Ascending aorta (tissue), 2 donors: ENCODE measurements at regions of chr1 and their contacts with region 1.

Region 1: GRCh38 chr1:235075188-235075926 is 53.3 kb downstream of the TOMM20 start:
- DNase-seq: peak; percentile 82 to 96
- H3K4me3 ChIP-seq: peak overlapping the region; percentile 32 to 49
- H3K27ac ChIP-seq: peak overlapping the region; percentile 94 to 98
- H3K4me1 ChIP-seq: peaks cover 19 to 71% of the 10 kb centered on the region in 2 donors
- H3K27me3 ChIP-seq: no peaks in the 10 kb centered on the region
- CTCF ChIP-seq: no peak

Region 2: GRCh38 chr1:234918181-234918841 is 157.0 kb before region 1 on chr1:
- intact Hi-C with region 1: loop called (anchors 2 kb)
- DNase-seq: peak in 1 of 2 donors; percentile 75
- H3K4me3 ChIP-seq: no peak overlapping the region
- H3K27ac ChIP-seq: peak overlapping the region; percentile 86 to 94
- H3K4me1 ChIP-seq: peaks cover 28 to 77% of the 10 kb centered on the region in 2 donors
- H3K27me3 ChIP-seq: no peaks in the 10 kb centered on the region
- CTCF ChIP-seq: no peak

Region 3: DNA sequence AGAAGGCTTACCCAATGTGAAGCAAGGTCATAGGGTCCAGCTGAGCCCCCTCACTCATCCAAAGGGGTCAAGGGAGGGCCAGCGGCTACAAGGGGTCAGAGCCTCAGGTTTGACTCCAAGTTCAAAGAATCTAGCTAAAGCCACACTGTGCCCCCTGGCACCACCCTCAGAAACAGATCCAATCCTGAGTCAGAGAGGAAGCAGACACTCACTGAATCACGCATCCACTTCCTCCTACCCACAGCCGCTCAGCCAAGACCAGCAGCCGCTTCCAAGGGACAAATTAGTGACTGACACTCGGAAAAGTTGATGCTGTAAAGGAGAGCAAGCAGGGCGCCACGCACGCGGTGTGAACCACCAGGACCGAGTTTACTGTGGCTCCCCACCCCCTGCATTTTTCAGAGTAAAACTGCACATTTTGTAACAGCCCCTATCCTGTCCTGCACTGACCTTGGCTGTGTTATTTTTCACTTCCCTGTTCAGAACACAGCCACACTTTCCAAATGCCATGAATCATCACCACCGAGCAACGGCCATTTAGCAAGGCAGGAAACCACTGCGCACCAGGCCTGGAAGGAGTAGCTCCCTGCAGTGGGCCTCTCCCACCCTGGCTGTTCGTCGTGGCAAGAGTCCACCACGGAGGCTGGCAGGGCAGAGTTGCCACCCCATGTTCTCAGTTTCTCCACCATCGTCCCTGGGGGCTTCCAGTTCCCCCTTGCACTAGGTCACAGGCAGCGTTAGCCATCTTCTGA is 94.5 kb before region 1 on chr1:
- intact Hi-C with region 1: loop called (anchors 1 kb)
- DNase-seq: peak; percentile 91 to 98
- H3K4me3 ChIP-seq: peak overlapping the region in 1 of 2 donors; percentile 44
- H3K27ac ChIP-seq: peak overlapping the region; percentile 98 to 99
- H3K4me1 ChIP-seq: peaks cover 24 to 65% of the 10 kb centered on the region in 2 donors
- H3K27me3 ChIP-seq: no peaks in the 10 kb centered on the region
- CTCF ChIP-seq: no peak

Region 4: GRCh38 chr1:234997201-234997895 is 78.0 kb before region 1 on chr1:
- intact Hi-C with region 1: loop called (anchors 1 kb)
- DNase-seq: peak; percentile 99 to 100
- H3K4me3 ChIP-seq: peak overlapping the region; percentile 28 to 29
- H3K27ac ChIP-seq: peak overlapping the region; percentile 89 to 94
- H3K4me1 ChIP-seq: peaks cover 3 to 28% of the 10 kb centered on the region in 2 donors
- H3K27me3 ChIP-seq: no peaks in the 10 kb centered on the region
- CTCF ChIP-seq: no peak